ENCODE measurements at regions of chr1 and their contacts with region 1.

Region 1: DNA sequence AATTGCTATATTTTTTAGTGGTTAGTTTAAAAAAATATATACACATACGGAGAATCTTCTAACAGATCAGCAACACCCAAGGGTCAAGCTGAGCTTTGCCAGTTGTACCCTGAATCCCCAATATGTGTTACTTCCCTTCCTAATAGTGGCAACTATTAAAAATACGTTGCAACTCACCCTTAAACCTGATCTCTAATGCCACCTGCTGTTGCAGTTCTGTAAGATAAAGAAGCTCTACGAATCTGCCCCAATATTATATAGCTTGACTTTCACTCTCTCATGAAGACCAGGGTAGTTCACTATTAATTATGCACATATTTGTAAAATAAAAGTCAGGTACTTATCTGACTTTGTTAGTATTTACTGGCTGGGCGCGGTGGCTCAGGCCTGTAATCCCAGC is 58.4 kb downstream of the ASH1L start:
- DNase-seq: no peak
- H3K4me3 ChIP-seq: no peak overlapping the region
- H3K4me3 Mint-ChIP-seq: no peak overlapping the region
- H3K27ac ChIP-seq: no peak overlapping the region
- H3K27ac Mint-ChIP-seq: peak overlapping the region in 2 of 8 donors; percentile 41 to 63
- H3K4me1 ChIP-seq: peaks cover 27% of the 10 kb centered on the region
- H3K4me1 Mint-ChIP-seq: peaks cover 33 to 62% (median 51%) of the 10 kb centered on the region in 3 donors
- H3K27me3 ChIP-seq: no peaks in the 10 kb centered on the region
- H3K27me3 Mint-ChIP-seq: no peaks in the 10 kb centered on the region

Region 2: DNA sequence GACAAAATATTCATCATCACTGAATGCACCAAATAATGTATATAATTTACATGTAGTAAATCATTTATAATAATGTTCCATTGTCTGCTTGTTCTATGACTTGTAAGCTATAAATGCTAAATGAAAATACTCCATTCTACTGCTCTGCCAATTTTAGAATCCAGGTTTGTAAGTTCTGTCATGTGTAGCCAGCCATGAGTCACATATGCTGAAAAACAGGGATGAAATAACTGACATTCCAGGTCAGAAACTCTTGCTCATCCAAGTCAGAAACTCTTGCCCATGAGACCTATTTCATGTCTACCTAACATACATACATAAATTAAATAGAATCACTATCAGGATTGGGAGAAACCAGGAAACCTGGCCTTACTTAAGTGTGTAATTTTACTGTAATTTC is 37.2 kb before region 1 on chr1:
- CTCF ChIA-PET with region 1: no interaction called
- POLR2A ChIA-PET with region 1: interaction called, 12 read pairs
- DNase-seq: no peak
- H3K4me3 ChIP-seq: no peak overlapping the region
- H3K4me3 Mint-ChIP-seq: peak overlapping the region in 2 of 7 donors; percentile 5 to 33
- H3K27ac ChIP-seq: no peak overlapping the region
- H3K27ac Mint-ChIP-seq: peak overlapping the region in 7 of 8 donors; percentile 3 to 86 (median 77)
- H3K4me1 ChIP-seq: peaks cover 26% of the 10 kb centered on the region
- H3K4me1 Mint-ChIP-seq: peaks cover 49 to 63% (median 62%) of the 10 kb centered on the region in 3 donors
- H3K27me3 ChIP-seq: no peaks in the 10 kb centered on the region
- H3K27me3 Mint-ChIP-seq: no peaks in the 10 kb centered on the region

Region 3: DNA sequence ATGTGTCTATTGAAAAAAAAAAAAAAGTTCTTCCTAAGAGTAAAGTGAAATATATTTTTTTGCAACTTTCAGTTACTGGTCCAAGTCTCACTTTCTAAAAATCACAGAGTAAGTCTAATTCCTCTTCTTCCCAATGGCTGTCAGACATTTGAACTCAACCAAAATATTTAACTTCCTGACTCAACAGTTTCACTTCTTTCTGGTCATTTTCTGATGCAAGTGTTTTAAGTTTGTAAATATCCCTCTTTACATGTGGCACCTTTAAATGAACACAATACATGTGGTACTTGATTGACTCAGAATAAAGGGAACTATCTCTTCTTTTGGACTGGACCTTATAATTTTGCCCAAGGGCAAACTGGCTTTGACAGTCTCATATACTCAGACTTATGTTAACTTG is 18.3 kb before region 1 on chr1:
- CTCF ChIA-PET with region 1: no interaction called
- POLR2A ChIA-PET with region 1: no interaction called
- DNase-seq: no peak
- H3K4me3 ChIP-seq: no peak overlapping the region
- H3K4me3 Mint-ChIP-seq: no peak overlapping the region
- H3K27ac ChIP-seq: no peak overlapping the region
- H3K27ac Mint-ChIP-seq: peak overlapping the region in 4 of 8 donors; percentile 20 to 58 (median 28)
- H3K4me1 ChIP-seq: no peaks in the 10 kb centered on the region
- H3K4me1 Mint-ChIP-seq: peaks cover 12 to 26% (median 22%) of the 10 kb centered on the region in 3 donors
- H3K27me3 ChIP-seq: no peaks in the 10 kb centered on the region
- H3K27me3 Mint-ChIP-seq: no peaks in the 10 kb centered on the region